CD4-positive, alpha-beta memory T cell (primary cell): ENCODE measurements at regions of chr14 and their contacts with region 1.

Region 1: GRCh38 chr14:48616931-48617330 is 941.5 kb upstream of the MDGA2 start:
- DNase-seq: no peak
- H3K4me3 ChIP-seq: no peak overlapping the region
- H3K4me3 Mint-ChIP-seq: no peak overlapping the region
- H3K27ac ChIP-seq: no peak overlapping the region
- H3K27ac Mint-ChIP-seq: no peak overlapping the region
- H3K4me1 ChIP-seq: no peaks in the 10 kb centered on the region
- H3K4me1 Mint-ChIP-seq: no peaks in the 10 kb centered on the region
- H3K27me3 ChIP-seq: no peaks in the 10 kb centered on the region
- H3K27me3 Mint-ChIP-seq: no peaks in the 10 kb centered on the region

Region 2: GRCh38 chr14:48575772-48576171 is 41.2 kb before region 1 on chr14:
- CTCF ChIA-PET with region 1: no interaction called
- POLR2A ChIA-PET with region 1: no interaction called
- intact Hi-C with region 1: loop called (anchors 1 kb)
- DNase-seq: no peak
- H3K4me3 ChIP-seq: no peak overlapping the region
- H3K4me3 Mint-ChIP-seq: no peak overlapping the region
- H3K27ac ChIP-seq: no peak overlapping the region
- H3K27ac Mint-ChIP-seq: no peak overlapping the region
- H3K4me1 ChIP-seq: no peaks in the 10 kb centered on the region
- H3K4me1 Mint-ChIP-seq: no peaks in the 10 kb centered on the region
- H3K27me3 ChIP-seq: no peaks in the 10 kb centered on the region
- H3K27me3 Mint-ChIP-seq: no peaks in the 10 kb centered on the region

Region 3: GRCh38 chr14:48983351-48983888 is 366.5 kb after region 1 on chr14:
- CTCF ChIA-PET with region 1: no interaction called
- POLR2A ChIA-PET with region 1: no interaction called
- intact Hi-C with region 1: no loop called
- DNase-seq: no peak
- H3K4me3 ChIP-seq: no peak overlapping the region
- H3K4me3 Mint-ChIP-seq: no peak overlapping the region
- H3K27ac ChIP-seq: no peak overlapping the region
- H3K27ac Mint-ChIP-seq: no peak overlapping the region
- H3K4me1 ChIP-seq: no peaks in the 10 kb centered on the region
- H3K4me1 Mint-ChIP-seq: no peaks in the 10 kb centered on the region
- H3K27me3 ChIP-seq: no peaks in the 10 kb centered on the region
- H3K27me3 Mint-ChIP-seq: no peaks in the 10 kb centered on the region